Heart right ventricle (tissue), 16 donors: ENCODE measurements at regions of chr3 and their contacts with region 1.

Region 1: DNA sequence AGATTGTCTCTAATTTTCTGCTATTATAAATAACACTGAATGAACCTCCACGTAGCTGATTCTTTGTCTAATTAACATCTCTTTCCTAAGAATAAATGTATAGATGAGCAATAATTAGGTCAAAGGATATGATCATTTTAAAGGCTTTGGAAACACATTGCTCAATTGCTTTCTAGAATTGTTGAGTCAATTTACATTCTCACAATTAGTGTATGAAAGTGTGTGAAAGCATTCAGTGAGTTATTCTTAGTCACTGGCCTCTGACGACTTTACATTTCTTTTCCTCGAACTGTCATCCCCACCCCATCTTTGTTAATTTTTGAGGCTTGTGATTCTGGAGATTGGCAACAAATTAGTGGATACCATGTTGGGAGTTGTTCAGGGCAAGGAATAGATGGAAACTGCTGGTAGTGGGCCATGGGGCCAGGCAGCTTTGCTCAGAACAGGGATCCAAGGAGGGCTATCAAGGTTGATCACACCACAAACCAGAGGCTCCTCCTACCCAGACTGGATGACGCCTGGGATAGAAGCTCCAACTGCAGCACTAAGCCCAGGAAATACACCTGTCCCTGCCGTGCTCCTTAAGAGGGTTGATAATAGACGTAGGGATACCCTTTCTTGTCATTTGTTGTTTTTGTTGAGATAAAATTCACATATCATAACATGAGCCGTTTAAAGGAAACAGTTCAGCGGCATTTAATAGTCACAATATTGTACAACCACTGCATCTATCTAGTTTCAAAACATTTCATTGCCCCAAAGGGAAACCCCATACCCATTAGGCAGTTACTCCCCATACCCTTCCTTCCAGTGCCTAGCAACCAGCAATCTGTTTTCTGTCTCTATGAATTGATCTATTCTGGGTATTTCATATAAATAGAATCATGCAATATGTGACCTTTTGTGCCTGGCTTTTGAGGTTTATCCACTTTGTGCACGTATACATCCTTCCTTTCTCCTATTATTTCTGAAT is 27.9 kb downstream of the EIF1B start:
- DNase-seq: no peak
- ATAC-seq: no peak
- H3K4me3 ChIP-seq: no peak overlapping the region
- H3K27ac ChIP-seq: no peak overlapping the region
- H3K4me1 ChIP-seq: peaks cover 0 to 10% (median 3%) of the 10 kb centered on the region in 9 donors
- H3K27me3 ChIP-seq: no peaks in the 10 kb centered on the region
- CTCF ChIP-seq: no peak

Region 2: GRCh38 chr3:40379674-40380306 is 42.4 kb after region 1 on chr3:
- intact Hi-C with region 1: no loop called
- DNase-seq: no peak
- ATAC-seq: no peak
- H3K4me3 ChIP-seq: no peak overlapping the region
- H3K27ac ChIP-seq: no peak overlapping the region
- H3K4me1 ChIP-seq: no peaks in the 10 kb centered on the region
- H3K27me3 ChIP-seq: no peaks in the 10 kb centered on the region
- CTCF ChIP-seq: no peak

Region 3: GRCh38 chr3:40432793-40433192 is 95.4 kb after region 1 on chr3:
- intact Hi-C with region 1: loop called in 1 of 10 experiments (anchors 5 kb)
- DNase-seq: no peak
- ATAC-seq: no peak
- H3K4me3 ChIP-seq: no peak overlapping the region
- H3K27ac ChIP-seq: no peak overlapping the region
- H3K4me1 ChIP-seq: no peaks in the 10 kb centered on the region
- H3K27me3 ChIP-seq: no peaks in the 10 kb centered on the region
- CTCF ChIP-seq: peak in 4 of 9 donors; percentile 10 to 20 (median 16)

Region 4: GRCh38 chr3:40445062-40445461 is 107.6 kb after region 1 on chr3:
- intact Hi-C with region 1: loop called in 1 of 10 experiments (anchors 10 kb)
- DNase-seq: no peak
- ATAC-seq: no peak
- H3K4me3 ChIP-seq: no peak overlapping the region
- H3K27ac ChIP-seq: no peak overlapping the region
- H3K4me1 ChIP-seq: no peaks in the 10 kb centered on the region
- H3K27me3 ChIP-seq: no peaks in the 10 kb centered on the region
- CTCF ChIP-seq: no peak

Region 5: DNA sequence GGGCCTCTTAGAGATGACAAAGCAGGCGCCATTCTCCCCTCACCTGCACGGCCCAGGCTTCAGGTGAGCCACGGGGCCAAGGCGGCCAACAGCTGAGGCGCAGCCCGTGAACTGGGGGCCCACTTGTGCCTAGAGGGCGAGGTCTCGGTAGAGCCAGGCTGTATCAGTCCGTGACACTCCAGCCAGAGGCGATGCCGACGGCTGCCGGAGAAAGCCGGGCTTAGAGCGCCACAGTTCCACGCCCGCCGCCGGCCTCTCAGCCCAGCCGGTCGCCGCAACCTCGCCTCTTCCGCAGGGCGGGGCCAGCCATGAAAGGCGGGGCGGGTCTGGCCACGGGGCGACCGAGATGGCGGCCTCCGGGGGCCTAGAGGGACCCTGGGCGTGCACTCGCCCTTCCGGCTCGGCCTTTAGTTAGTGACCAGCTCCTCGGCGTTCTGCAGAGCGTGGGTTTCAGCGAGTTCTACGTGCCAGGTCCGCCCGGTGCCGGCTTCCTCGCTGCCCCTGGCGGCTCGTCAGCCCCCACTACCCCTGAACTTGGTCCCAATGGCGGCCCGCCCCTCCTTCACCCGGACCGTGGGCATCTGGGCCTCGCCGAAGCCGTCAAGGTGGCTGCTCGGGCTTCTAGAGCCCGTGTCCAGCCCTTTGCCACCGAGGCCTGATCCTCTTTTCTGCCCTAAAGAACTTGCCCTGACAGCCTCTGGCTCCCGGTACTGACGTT is 187.3 kb after region 1 on chr3 and contains the start of gene ZNF621:
- intact Hi-C with region 1: loop called in 1 of 10 experiments (anchors 10 kb)
- DNase-seq: peak; percentile 92 to 94
- ATAC-seq: peak; percentile 100
- H3K4me3 ChIP-seq: peak within 1 kb of the TSS; percentile 62 to 97 (median 78)
- H3K27ac ChIP-seq: peak within 1 kb of the TSS; percentile 57 to 96 (median 90)
- H3K4me1 ChIP-seq: peaks cover 0 to 22% (median 12%) of the 10 kb centered on the region in 9 donors
- H3K27me3 ChIP-seq: no peaks in the 10 kb centered on the region
- CTCF ChIP-seq: peak in 2 of 9 donors; percentile 14 to 20
- total RNA-seq, gene ZNF621: 8.9 to 14.6 (median 10.5) TPM

Region 6: DNA sequence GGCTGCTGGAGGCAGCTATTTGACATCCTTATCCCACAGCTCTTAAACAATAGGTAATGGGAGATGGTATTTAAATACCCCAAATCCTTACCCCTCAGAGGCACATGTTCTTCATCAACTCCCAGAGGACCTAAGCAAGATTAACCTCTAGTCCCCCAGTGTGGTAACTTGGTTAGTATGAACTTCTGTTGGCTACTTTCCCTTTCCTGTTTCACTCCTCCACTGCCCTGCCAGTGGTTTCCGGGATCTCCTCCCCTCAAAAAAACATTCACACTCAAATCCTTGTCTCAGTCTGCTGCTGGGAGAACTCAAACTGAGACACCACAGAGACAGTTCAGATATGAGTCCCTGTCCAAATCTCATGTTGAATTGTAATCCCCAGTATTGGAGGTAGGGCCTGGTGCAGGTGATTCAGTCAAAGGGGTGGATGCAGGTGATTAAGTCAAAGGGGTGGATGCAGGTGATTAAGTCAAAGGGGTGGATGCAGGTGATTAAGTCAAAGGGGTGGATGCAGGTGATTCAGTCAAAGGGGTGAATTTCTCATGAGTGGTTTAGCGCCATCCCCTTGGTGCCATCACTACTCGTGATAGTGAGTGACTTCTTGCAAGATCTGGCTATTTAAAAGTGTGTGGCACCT is 526.8 kb after region 1 on chr3:
- intact Hi-C with region 1: no loop called
- DNase-seq: no peak
- ATAC-seq: no peak
- H3K4me3 ChIP-seq: no peak overlapping the region
- H3K27ac ChIP-seq: no peak overlapping the region
- H3K4me1 ChIP-seq: peaks cover 0 to 18% (median 5%) of the 10 kb centered on the region in 9 donors
- H3K27me3 ChIP-seq: no peaks in the 10 kb centered on the region
- CTCF ChIP-seq: no peak

Region 7: GRCh38 chr3:41881233-41881821 is 1543.9 kb after region 1 on chr3:
- intact Hi-C with region 1: loop called in 3 of 10 experiments (anchors 5 to 10 kb)
- DNase-seq: peak in 1 of 2 donors; percentile 23
- ATAC-seq: no peak
- H3K4me3 ChIP-seq: no peak overlapping the region
- H3K27ac ChIP-seq: no peak overlapping the region
- H3K4me1 ChIP-seq: no peaks in the 10 kb centered on the region
- H3K27me3 ChIP-seq: no peaks in the 10 kb centered on the region
- CTCF ChIP-seq: peak; percentile 47 to 81 (median 76)